AG04450 (cell line): ENCODE measurements at regions of chr5 and their contacts with region 1.

Region 1: GRCh38 chr5:172179361-172179989 is 8.5 kb downstream of the STK10 start:
- DNase-seq: no peak
- H3K4me3 ChIP-seq: no peak overlapping the region
- H3K27ac ChIP-seq: peak overlapping the region; percentile 2
- H3K27me3 ChIP-seq: no peaks in the 10 kb centered on the region
- CTCF ChIP-seq: no peak

Region 2: DNA sequence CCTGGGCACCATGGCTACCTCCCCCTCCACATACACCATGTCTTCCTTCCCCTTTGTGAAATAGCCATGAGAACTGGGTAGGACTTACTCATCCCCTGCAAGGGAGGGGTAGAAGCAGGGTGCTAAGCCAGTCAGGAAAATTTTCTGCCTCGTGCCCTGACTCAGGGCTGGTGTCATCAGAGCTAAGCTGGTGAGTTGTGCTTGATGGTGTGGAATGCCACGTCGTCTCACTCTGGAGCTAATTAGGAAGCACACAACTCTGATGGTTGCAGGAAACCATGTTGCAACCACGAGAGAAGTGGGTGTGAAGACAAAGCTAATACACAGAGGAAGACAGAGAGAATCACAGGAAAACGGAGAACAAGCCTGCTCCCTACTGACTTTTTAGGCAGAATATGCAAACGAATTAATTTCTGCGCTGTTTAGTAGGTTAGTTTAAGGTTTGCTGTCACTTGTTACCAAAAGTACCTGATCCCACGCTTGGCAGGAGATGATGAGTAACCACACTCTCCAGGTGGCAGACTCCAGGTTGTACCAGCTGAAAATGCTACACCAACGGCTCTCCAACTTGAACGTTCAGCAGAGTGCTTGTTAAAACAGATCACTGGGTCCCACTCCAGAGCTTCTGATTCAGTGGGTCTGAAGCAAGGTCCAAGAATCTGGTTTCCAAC is 46.0 kb before region 1 on chr5:
- CTCF ChIA-PET with region 1: no interaction called
- POLR2A ChIA-PET with region 1: interaction called, 11 read pairs
- DNase-seq: peak; percentile 37
- H3K4me3 ChIP-seq: no peak overlapping the region
- H3K27ac ChIP-seq: peak overlapping the region; percentile 75
- H3K27me3 ChIP-seq: no peaks in the 10 kb centered on the region
- CTCF ChIP-seq: no peak

Region 3: DNA sequence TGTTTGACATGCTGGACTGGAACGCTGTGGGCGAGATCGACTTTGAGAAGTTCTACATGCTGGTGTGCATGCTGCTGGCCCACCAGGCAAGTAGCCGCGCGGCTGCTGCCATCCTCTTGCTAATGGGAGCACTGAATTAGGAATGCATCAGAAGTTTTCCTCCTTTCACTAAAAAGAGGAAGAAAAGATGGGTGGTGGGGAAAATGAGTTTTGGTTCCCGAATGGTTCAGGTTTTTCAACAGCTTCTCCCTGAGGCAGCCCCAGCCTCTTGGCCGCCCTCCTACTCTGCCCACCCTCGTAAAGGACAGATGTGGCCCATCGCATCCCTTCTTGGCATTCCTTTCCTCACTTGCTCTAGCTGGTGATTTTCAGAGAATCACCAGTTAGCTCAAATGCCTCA is 20.0 kb after region 1 on chr5:
- CTCF ChIA-PET with region 1: no interaction called
- POLR2A ChIA-PET with region 1: no interaction called
- DNase-seq: no peak
- H3K4me3 ChIP-seq: no peak overlapping the region
- H3K27ac ChIP-seq: no peak overlapping the region
- H3K27me3 ChIP-seq: no peaks in the 10 kb centered on the region
- CTCF ChIP-seq: no peak

Region 4: GRCh38 chr5:172223901-172224873 is 44.7 kb after region 1 on chr5:
- CTCF ChIA-PET with region 1: interaction called, 10 read pairs
- POLR2A ChIA-PET with region 1: no interaction called
- DNase-seq: no peak
- H3K4me3 ChIP-seq: no peak overlapping the region
- H3K27ac ChIP-seq: no peak overlapping the region
- H3K27me3 ChIP-seq: no peaks in the 10 kb centered on the region
- CTCF ChIP-seq: no peak

Region 5: DNA sequence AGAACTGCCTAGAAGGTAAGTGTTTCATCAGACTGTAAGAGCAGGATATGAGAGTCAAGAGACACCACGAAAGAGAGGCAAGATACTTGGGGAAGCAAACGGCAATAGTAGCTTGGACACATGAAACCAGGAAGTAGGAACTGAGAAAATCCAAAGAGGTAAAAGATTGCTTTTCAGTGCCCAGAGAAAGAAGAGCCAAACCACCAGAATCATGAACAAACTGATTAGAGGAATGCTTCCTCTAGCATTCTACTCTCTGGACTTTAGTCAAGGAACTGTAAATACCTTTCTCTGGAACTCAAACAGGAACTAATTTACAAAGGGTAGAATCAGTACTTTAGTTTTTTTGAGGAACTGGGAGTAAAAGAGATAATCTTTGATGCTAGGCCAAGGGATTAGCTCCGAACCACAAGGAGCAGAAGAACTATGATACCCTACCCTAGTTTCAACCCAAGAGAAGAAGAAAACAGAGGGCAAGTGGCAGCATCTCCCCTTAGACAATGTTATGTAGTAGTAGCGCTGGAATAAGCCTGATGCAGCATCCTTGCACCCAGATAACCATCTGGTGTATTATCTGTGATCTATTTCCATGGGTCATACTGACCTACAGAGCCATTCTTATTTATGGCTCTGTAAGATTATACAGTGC is 55.8 kb after region 1 on chr5:
- CTCF ChIA-PET with region 1: no interaction called
- POLR2A ChIA-PET with region 1: no interaction called
- DNase-seq: no peak
- H3K4me3 ChIP-seq: no peak overlapping the region
- H3K27ac ChIP-seq: no peak overlapping the region
- H3K27me3 ChIP-seq: no peaks in the 10 kb centered on the region
- CTCF ChIP-seq: no peak